Calu3 (cell line): ENCODE measurements at regions of chr1 and their contacts with region 1.

Region 1: DNA sequence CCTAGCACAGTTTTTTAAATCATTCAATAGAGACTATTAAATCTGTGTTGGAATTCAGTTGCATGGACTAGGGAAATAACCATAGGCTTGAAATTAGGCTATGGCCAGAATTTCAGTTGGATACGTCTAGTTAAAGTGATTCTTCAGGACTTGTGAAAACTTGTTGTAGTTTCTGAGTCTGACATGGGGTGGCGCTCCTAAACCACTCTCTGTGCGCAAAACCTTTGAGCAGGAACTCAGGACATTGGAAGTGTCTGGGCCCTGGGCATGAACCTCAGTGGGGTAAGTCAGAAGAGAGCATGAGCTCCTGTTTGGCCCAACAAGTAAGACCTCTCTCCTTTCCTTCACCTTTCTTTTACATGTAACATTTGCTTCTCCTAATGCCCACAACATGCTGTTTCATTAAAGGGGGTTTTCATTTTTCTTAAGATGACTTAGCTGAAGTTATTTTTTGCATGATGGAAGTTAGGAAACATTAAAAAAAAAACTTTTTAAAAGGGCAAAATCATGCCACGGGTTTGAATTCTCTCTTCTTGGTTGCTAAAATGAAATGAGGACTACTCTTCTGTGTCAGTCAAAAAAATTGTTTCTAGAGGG is 17.1 kb upstream of the CCDC190 start:
- DNase-seq: peak; percentile 78
- H3K4me3 Mint-ChIP-seq: no peak overlapping the region
- H3K27ac Mint-ChIP-seq: no peak overlapping the region
- H3K4me1 Mint-ChIP-seq: peaks cover 7% of the 10 kb centered on the region
- H3K27me3 Mint-ChIP-seq: peaks cover 11% of the 10 kb centered on the region
- CTCF ChIP-seq: peak; percentile 87

Region 2: GRCh38 chr1:162823771-162824525 is 54.1 kb before region 1 on chr1:
- CTCF ChIA-PET with region 1: no interaction called
- intact Hi-C with region 1: no loop called
- DNase-seq: no peak
- H3K4me3 Mint-ChIP-seq: no peak overlapping the region
- H3K27ac Mint-ChIP-seq: no peak overlapping the region
- H3K4me1 Mint-ChIP-seq: peaks cover 31% of the 10 kb centered on the region
- H3K27me3 Mint-ChIP-seq: peaks cover 4% of the 10 kb centered on the region
- CTCF ChIP-seq: no peak

Region 3: GRCh38 chr1:162854245-162854882 is 23.7 kb before region 1 on chr1:
- CTCF ChIA-PET with region 1: interaction called, 8 read pairs
- intact Hi-C with region 1: loop called (anchors 1 kb)
- DNase-seq: peak; percentile 79
- H3K4me3 Mint-ChIP-seq: no peak overlapping the region
- H3K27ac Mint-ChIP-seq: no peak overlapping the region
- H3K4me1 Mint-ChIP-seq: peaks cover 30% of the 10 kb centered on the region
- H3K27me3 Mint-ChIP-seq: no peaks in the 10 kb centered on the region
- CTCF ChIP-seq: peak; percentile 78

Region 4: DNA sequence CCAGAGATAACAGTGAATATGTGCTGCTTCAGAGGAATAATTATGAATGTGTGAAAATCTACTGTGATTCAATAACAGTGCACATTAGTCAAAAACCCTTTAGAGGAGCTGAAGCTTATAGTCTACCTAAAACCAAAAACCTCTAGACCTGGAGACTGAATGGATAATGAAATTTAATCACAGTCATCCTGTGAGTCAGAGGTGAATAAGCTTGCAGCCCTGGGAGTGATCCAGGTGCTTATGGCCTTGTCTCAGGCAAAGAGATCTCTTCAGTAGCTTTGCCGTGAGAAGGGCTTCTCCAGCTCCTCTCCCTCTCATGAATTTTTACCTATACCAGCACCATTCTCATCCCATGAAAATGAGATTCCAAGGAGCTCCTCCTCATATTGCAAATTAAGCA is 109.8 kb after region 1 on chr1:
- CTCF ChIA-PET with region 1: no interaction called
- intact Hi-C with region 1: loop called (anchors 10 kb)
- DNase-seq: no peak
- H3K4me3 Mint-ChIP-seq: no peak overlapping the region
- H3K27ac Mint-ChIP-seq: no peak overlapping the region
- H3K4me1 Mint-ChIP-seq: no peaks in the 10 kb centered on the region
- H3K27me3 Mint-ChIP-seq: no peaks in the 10 kb centered on the region
- CTCF ChIP-seq: no peak

Region 5: DNA sequence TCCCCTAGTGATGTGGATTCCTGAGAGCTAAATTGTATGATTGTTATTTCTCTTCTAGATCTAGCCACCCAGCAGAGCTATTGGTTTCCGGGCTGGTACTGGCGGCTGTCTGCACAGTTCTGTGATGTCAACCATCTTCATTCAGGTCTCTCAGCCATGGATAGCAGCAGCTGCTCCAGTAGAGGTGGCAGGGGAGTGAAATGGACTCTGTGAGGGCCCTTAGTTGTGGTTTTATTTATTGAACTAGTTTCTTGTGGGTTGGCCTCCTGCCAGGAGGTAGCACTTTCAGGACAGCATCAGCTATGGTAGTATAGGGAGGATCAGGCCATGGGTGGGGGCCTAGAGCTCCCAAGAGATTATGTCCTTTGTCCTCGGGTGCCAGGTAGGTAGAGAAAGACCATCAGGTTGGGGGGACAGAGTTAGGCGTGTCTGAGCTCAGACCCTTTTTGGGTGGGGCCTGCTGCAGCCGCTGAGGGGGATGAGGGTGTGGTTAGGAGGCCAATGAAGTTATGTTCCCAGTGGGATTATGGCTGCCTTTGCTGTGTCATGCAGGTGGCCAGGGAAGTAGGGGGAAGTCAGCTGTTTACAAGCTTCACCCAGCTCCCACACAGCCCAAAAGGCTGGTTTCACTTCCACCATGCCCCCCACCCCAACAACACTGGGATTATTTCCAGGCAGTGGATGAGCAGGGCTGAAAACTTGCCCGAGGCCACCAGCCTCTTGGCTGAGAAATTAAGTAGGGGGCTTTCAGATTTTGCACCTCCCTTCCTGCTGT is 135.9 kb after region 1 on chr1:
- CTCF ChIA-PET with region 1: no interaction called
- intact Hi-C with region 1: no loop called
- DNase-seq: peak; percentile 52
- H3K4me3 Mint-ChIP-seq: no peak overlapping the region
- H3K27ac Mint-ChIP-seq: no peak overlapping the region
- H3K4me1 Mint-ChIP-seq: peaks cover 14% of the 10 kb centered on the region
- H3K27me3 Mint-ChIP-seq: no peaks in the 10 kb centered on the region
- CTCF ChIP-seq: no peak

Region 6: GRCh38 chr1:163071405-163072255 is 193.5 kb after region 1 on chr1:
- CTCF ChIA-PET with region 1: interaction called, 29 read pairs
- intact Hi-C with region 1: loop called (anchors 1 kb)
- DNase-seq: peak; percentile 79
- H3K4me3 Mint-ChIP-seq: no peak overlapping the region
- H3K27ac Mint-ChIP-seq: no peak overlapping the region
- H3K4me1 Mint-ChIP-seq: no peaks in the 10 kb centered on the region
- H3K27me3 Mint-ChIP-seq: peaks cover 41% of the 10 kb centered on the region
- CTCF ChIP-seq: peak; percentile 81

Region 7: GRCh38 chr1:163315773-163316374 is 437.8 kb after region 1 on chr1:
- CTCF ChIA-PET with region 1: interaction called, 7 read pairs
- intact Hi-C with region 1: loop called (anchors 1 kb)
- DNase-seq: peak; percentile 59
- H3K4me3 Mint-ChIP-seq: no peak overlapping the region
- H3K27ac Mint-ChIP-seq: no peak overlapping the region
- H3K4me1 Mint-ChIP-seq: peaks cover 4% of the 10 kb centered on the region
- H3K27me3 Mint-ChIP-seq: no peaks in the 10 kb centered on the region
- CTCF ChIP-seq: peak; percentile 55